Caco-2 (cell line): ENCODE measurements at regions of chr20 and their contacts with region 1.

Region 1: GRCh38 chr20:63116412-63117099 is 99.4 kb downstream of the YTHDF1 start:
- DNase-seq: peak; percentile 49 to 78
- H3K4me3 ChIP-seq: no peak overlapping the region
- H3K4me3 Mint-ChIP-seq: no peak overlapping the region
- H3K27ac Mint-ChIP-seq: no peak overlapping the region
- H3K4me1 ChIP-seq: no peaks in the 10 kb centered on the region
- H3K4me1 Mint-ChIP-seq: no peaks in the 10 kb centered on the region
- H3K27me3 ChIP-seq: peaks cover 3% of the 10 kb centered on the region; the same call in 1 of the 2 replicates
- H3K27me3 Mint-ChIP-seq: peaks cover 57% of the 10 kb centered on the region
- CTCF ChIP-seq: no peak

Region 2: DNA sequence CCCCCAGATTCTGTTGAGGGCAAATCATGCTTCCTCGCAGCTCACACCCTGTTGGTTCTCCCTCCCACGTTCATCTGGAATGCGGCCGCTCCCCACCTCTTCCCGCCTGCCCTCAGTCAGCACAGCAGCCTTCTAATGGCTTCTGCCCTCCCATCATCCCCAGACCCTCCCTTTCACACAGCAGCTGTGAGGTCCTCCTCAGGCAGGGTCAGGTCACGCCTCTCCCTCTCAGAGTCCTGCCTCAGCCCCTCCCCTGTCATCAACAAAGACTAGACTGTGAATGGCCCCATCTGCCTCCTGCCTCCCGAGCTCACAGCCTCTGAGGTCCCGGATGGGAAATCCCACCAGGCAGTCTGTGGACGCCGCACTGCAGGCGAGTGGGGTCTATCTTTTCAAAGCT is 101.8 kb before region 1 on chr20:
- CTCF ChIA-PET with region 1: no interaction called
- POLR2A ChIA-PET with region 1: no interaction called
- intact Hi-C with region 1: no loop called
- DNase-seq: peak; percentile 96 to 97
- H3K4me3 ChIP-seq: peak overlapping the region; percentile 36
- H3K4me3 Mint-ChIP-seq: peak overlapping the region; percentile 81
- H3K27ac Mint-ChIP-seq: peak overlapping the region; percentile 81
- H3K4me1 ChIP-seq: peaks cover 55% of the 10 kb centered on the region
- H3K4me1 Mint-ChIP-seq: peaks cover 46% of the 10 kb centered on the region
- H3K27me3 ChIP-seq: no peaks in the 10 kb centered on the region
- H3K27me3 Mint-ChIP-seq: no peaks in the 10 kb centered on the region
- CTCF ChIP-seq: no peak

Region 3: GRCh38 chr20:63082301-63082805 is 34.2 kb before region 1 on chr20:
- CTCF ChIA-PET with region 1: no interaction called
- POLR2A ChIA-PET with region 1: no interaction called
- intact Hi-C with region 1: loop called (anchors 2 kb)
- DNase-seq: peak; percentile 81 to 92
- H3K4me3 ChIP-seq: no peak overlapping the region
- H3K4me3 Mint-ChIP-seq: no peak overlapping the region
- H3K27ac Mint-ChIP-seq: no peak overlapping the region
- H3K4me1 ChIP-seq: 0 out of 2 replicates have a peak, but pooled peaks cover 6% of the 10 kb centered on the region
- H3K4me1 Mint-ChIP-seq: no peaks in the 10 kb centered on the region
- H3K27me3 ChIP-seq: no peaks in the 10 kb centered on the region; the same call in none of the 2 replicates
- H3K27me3 Mint-ChIP-seq: peaks cover 18% of the 10 kb centered on the region
- CTCF ChIP-seq: no peak

Region 4: GRCh38 chr20:63096151-63096589 is 20.4 kb before region 1 on chr20:
- CTCF ChIA-PET with region 1: no interaction called
- POLR2A ChIA-PET with region 1: no interaction called
- intact Hi-C with region 1: no loop called
- DNase-seq: peak in 1 of 2 experiments; percentile 71
- H3K4me3 ChIP-seq: no peak overlapping the region
- H3K4me3 Mint-ChIP-seq: no peak overlapping the region
- H3K27ac Mint-ChIP-seq: no peak overlapping the region
- H3K4me1 ChIP-seq: peaks cover 11% of the 10 kb centered on the region
- H3K4me1 Mint-ChIP-seq: no peaks in the 10 kb centered on the region
- H3K27me3 ChIP-seq: no peaks in the 10 kb centered on the region; the same call in 1 of the 2 replicates
- H3K27me3 Mint-ChIP-seq: peaks cover 11% of the 10 kb centered on the region
- CTCF ChIP-seq: no peak

Region 5: DNA sequence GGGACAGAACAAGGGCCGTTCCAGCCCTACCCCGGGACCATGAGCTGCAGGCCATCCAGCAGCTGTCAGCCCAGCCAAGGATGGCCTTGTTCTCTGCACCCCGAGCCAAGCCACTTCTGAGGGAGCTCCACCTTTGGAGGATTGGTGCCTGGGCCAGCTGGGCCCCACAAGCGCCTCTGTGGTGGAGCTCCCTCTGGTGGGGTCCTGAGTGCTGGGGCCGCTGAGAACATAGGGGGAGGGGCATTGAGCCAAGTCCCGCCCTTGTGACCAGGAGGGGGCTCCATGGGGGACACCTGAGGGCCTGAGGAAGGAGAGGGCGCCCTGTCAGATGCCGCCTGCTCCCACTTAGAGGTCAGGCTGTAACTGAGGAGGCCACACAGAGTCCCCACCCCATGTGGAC is 56.2 kb after region 1 on chr20:
- CTCF ChIA-PET with region 1: no interaction called
- POLR2A ChIA-PET with region 1: no interaction called
- intact Hi-C with region 1: loop called (anchors 5 kb)
- DNase-seq: peak in 1 of 2 experiments; percentile 67
- H3K4me3 ChIP-seq: no peak overlapping the region
- H3K4me3 Mint-ChIP-seq: no peak overlapping the region
- H3K27ac Mint-ChIP-seq: no peak overlapping the region
- H3K4me1 ChIP-seq: peaks cover 30% of the 10 kb centered on the region
- H3K4me1 Mint-ChIP-seq: peaks cover 6% of the 10 kb centered on the region
- H3K27me3 ChIP-seq: peaks cover 7% of the 10 kb centered on the region; the same call in 1 of the 2 replicates
- H3K27me3 Mint-ChIP-seq: peaks cover 32% of the 10 kb centered on the region
- CTCF ChIP-seq: peak; percentile 52 to 66